Ascending aorta (tissue), 2 donors: ENCODE measurements at regions of chr15 and their contacts with region 1.

Region 1: GRCh38 chr15:62389885-62390790 is 225.1 kb upstream of the C2CD4B start:
- DNase-seq: peak in 1 of 2 donors; percentile 78
- H3K4me3 ChIP-seq: peak within 1 kb of the TSS; percentile 60 to 88
- H3K27ac ChIP-seq: peak within 1 kb of the TSS; percentile 83 to 93
- H3K4me1 ChIP-seq: peaks cover 7% of the 10 kb centered on the region in 2 donors
- H3K27me3 ChIP-seq: no peaks in the 10 kb centered on the region
- CTCF ChIP-seq: no peak

Region 2: GRCh38 chr15:62421289-62421688 is 31.2 kb after region 1 on chr15:
- intact Hi-C with region 1: no loop called
- DNase-seq: no peak
- H3K4me3 ChIP-seq: no peak overlapping the region
- H3K27ac ChIP-seq: peak overlapping the region in 1 of 2 donors; percentile 42
- H3K4me1 ChIP-seq: peaks cover 10 to 29% of the 10 kb centered on the region in 2 donors
- H3K27me3 ChIP-seq: no peaks in the 10 kb centered on the region
- CTCF ChIP-seq: no peak

Region 3: GRCh38 chr15:62432702-62433398 is 42.7 kb after region 1 on chr15:
- intact Hi-C with region 1: loop called (anchors 2 kb)
- DNase-seq: peak in 1 of 2 donors; percentile 82
- H3K4me3 ChIP-seq: no peak overlapping the region
- H3K27ac ChIP-seq: peak overlapping the region; percentile 80 to 84
- H3K4me1 ChIP-seq: peaks cover 4 to 40% of the 10 kb centered on the region in 2 donors
- H3K27me3 ChIP-seq: no peaks in the 10 kb centered on the region
- CTCF ChIP-seq: no peak

Region 4: DNA sequence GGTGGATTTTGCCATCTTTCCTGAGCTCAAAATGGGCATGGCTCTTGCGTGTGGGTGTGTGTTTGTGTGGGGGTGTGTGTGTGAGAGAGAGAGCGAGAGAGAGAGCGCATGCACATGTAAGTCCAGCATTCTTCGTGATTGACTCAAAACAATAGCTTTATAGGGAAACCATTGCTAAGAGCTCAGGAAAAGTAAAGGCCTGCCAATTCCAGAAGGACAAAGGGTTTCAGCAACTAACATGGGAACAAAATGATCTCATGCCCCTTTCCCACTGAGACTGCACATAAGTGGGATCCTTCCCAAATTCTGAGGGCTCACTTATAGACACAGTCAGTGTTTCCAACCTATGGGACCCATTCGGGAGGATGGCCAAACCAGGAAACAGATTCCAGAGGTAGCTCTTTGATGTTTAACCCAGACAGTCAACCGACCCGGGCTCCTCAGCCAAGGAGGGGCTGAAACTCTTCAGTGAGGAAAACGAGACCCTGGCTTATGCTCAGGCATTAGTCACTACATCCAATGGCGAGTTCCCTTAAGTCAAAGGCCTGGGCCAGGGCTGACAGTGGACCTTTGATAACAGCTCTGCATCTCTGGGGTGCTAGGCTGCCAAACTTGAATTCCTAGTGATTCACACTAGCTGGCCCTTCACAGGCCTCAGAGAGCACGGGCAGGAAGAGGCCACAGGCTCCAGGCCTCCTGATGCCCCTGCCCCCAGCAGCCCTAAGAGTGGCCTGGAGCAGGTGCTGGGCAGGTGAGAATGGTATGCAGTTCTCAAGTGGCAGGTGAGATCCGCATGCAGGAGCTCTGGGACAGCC is 79.9 kb after region 1 on chr15:
- intact Hi-C with region 1: loop called (anchors 5 kb)
- DNase-seq: peak in 1 of 2 donors; percentile 93
- H3K4me3 ChIP-seq: peak overlapping the region in 1 of 2 donors; percentile 26
- H3K27ac ChIP-seq: peak overlapping the region; percentile 92 to 98
- H3K4me1 ChIP-seq: peaks cover 37 to 83% of the 10 kb centered on the region in 2 donors
- H3K27me3 ChIP-seq: no peaks in the 10 kb centered on the region
- CTCF ChIP-seq: no peak

Region 5: GRCh38 chr15:62649793-62650420 is 259.8 kb after region 1 on chr15:
- intact Hi-C with region 1: loop called (anchors 2 kb)
- DNase-seq: no peak
- H3K4me3 ChIP-seq: no peak overlapping the region
- H3K27ac ChIP-seq: peak overlapping the region; percentile 28 to 33
- H3K4me1 ChIP-seq: no peaks in the 10 kb centered on the region
- H3K27me3 ChIP-seq: no peaks in the 10 kb centered on the region
- CTCF ChIP-seq: no peak

Region 6: GRCh38 chr15:63048115-63048775 is 658.1 kb after region 1 on chr15:
- intact Hi-C with region 1: loop called (anchors 10 kb)
- DNase-seq: peak; percentile 59 to 94
- H3K4me3 ChIP-seq: peak overlapping the region; percentile 76 to 85
- H3K27ac ChIP-seq: peak overlapping the region; percentile 86 to 98
- H3K4me1 ChIP-seq: peaks cover 12 to 50% of the 10 kb centered on the region in 2 donors
- H3K27me3 ChIP-seq: no peaks in the 10 kb centered on the region
- CTCF ChIP-seq: peak; percentile 87 to 97 (median 90)